AG04450 (cell line): ENCODE measurements at regions of chr14 and their contacts with region 1.

Region 1: GRCh38 chr14:38867561-38868150 is 235.4 kb downstream of the SEC23A start:
- DNase-seq: peak; percentile 55
- H3K4me3 ChIP-seq: no peak overlapping the region
- H3K27ac ChIP-seq: no peak overlapping the region
- H3K27me3 ChIP-seq: peaks cover 2% of the 10 kb centered on the region
- CTCF ChIP-seq: peak; percentile 86

Region 2: GRCh38 chr14:37709419-37710195 is 1158.0 kb before region 1 on chr14:
- CTCF ChIA-PET with region 1: interaction called, 12 read pairs
- POLR2A ChIA-PET with region 1: no interaction called
- DNase-seq: no peak
- H3K4me3 ChIP-seq: no peak overlapping the region
- H3K27ac ChIP-seq: no peak overlapping the region
- H3K27me3 ChIP-seq: no peaks in the 10 kb centered on the region
- CTCF ChIP-seq: peak; percentile 59

Region 3: DNA sequence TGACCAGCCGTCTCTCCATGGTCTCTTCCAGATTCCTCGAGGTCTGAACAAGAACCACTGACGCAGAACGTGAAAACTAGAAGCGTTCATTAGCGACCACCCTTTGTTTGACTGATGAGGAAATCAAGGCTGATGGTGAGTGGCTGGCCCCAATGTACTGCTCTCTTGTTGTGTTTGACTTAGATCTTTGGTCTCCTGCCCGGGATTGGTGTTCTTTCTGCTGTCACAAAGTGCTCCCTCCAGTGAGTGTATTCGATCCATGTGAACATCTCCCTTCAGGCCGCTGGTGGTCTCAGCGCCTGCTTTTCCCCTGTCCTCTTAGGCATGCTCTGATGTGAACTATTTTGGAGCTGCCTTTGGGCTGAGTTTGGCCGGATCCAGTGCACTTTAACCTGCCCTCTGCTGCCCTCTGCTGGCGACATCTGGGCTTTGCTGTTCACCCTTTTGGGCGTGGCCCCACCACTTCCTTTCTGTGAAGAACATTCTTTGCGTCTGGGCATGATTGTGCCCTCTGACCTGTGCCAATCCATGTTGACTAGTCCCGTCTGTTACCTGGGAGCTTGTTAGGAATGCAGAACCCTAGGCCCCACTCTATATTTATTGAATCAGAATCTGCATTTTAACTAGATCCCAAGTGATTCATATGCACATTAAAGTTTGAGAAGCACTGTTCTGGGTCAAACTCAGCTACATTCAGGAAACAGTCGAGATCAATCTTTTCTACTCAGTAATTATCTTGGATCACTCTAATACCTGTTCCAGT is 993.0 kb before region 1 on chr14:
- CTCF ChIA-PET with region 1: interaction called, 11 read pairs
- POLR2A ChIA-PET with region 1: no interaction called
- DNase-seq: peak; percentile 20
- H3K4me3 ChIP-seq: no peak overlapping the region
- H3K27ac ChIP-seq: no peak overlapping the region
- H3K27me3 ChIP-seq: no peaks in the 10 kb centered on the region
- CTCF ChIP-seq: peak; percentile 93

Region 4: GRCh38 chr14:37903343-37904191 is 964.1 kb before region 1 on chr14:
- CTCF ChIA-PET with region 1: interaction called, 92 read pairs
- POLR2A ChIA-PET with region 1: no interaction called
- DNase-seq: peak; percentile 10
- H3K4me3 ChIP-seq: no peak overlapping the region
- H3K27ac ChIP-seq: no peak overlapping the region
- H3K27me3 ChIP-seq: peaks cover 2% of the 10 kb centered on the region
- CTCF ChIP-seq: peak; percentile 56

Region 5: DNA sequence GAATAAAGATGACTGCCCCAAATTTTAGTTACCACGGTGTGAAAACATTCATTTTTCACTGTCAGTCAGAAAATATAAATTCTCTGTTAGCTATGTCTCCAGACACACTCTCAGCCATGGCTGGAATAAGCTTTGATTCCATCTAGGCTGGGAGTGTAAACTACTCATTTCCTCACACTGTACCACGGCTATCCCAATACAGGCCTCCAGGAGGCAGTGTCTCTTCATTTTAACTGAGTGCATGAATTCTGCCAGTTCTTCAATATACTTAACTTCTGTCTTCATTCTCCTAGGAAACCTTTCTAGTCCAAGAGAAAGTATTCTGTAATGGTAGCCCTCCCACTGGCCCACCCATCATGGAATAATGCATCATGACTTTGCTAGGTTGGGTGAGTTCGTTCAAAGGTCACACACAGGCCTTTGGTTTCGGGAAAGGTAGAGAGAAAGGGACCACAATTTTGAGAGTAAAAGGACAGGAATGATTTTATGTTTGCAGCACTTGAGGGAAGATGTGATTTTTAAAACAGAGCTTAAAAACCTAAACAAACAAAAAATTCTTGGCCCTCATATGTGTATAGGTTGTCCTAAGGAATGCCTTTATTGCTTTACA is 145.7 kb before region 1 on chr14:
- CTCF ChIA-PET with region 1: interaction called, 43 read pairs
- POLR2A ChIA-PET with region 1: no interaction called
- DNase-seq: no peak
- H3K4me3 ChIP-seq: no peak overlapping the region
- H3K27ac ChIP-seq: no peak overlapping the region
- H3K27me3 ChIP-seq: no peaks in the 10 kb centered on the region
- CTCF ChIP-seq: peak; percentile 76

Region 6: GRCh38 chr14:38880643-38881524 is 13.2 kb after region 1 on chr14:
- CTCF ChIA-PET with region 1: interaction called, 36 read pairs
- POLR2A ChIA-PET with region 1: no interaction called
- DNase-seq: no peak
- H3K4me3 ChIP-seq: no peak overlapping the region
- H3K27ac ChIP-seq: no peak overlapping the region
- H3K27me3 ChIP-seq: peaks cover 4% of the 10 kb centered on the region
- CTCF ChIP-seq: no peak

Region 7: DNA sequence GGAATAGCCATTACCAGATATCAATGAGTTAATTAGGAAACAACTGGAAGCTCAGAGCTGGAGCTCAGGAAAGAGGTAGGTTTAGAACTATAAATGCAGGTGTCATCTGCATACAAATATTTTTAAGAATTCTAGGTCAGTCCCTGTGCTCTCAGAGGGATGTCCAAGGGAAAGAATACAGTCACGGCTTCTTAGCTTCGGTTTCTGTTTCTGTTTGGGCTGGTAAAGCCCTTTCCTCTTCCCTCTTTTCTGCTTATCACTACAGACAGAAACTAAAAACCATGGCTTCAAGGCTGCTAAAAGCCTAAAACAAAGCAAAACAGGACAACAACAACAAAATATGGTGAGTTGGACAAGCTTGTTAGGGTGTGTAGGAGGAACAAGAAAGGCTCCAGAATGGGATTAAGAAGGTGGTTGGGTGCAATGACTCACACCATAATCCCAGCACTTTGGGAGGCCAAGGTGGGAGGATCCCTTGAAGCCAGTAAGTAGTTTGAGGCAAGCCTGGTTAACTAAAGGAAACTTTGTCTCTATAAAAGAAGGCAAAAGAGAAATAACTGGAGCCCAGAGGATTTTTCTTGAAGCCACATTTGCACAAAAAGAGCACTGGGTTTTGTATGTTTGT is 122.4 kb after region 1 on chr14:
- CTCF ChIA-PET with region 1: interaction called, 10 read pairs
- POLR2A ChIA-PET with region 1: no interaction called
- DNase-seq: no peak
- H3K4me3 ChIP-seq: no peak overlapping the region
- H3K27ac ChIP-seq: no peak overlapping the region
- H3K27me3 ChIP-seq: no peaks in the 10 kb centered on the region
- CTCF ChIP-seq: no peak